ENCODE measurements at regions of chr12 and their contacts with region 1.

Region 1: GRCh38 chr12:116620492-116621191 is 61.5 kb downstream of the MAP1LC3B2 start:
- DNase-seq: no peak
- CTCF ChIP-seq: no peak

Region 2: DNA sequence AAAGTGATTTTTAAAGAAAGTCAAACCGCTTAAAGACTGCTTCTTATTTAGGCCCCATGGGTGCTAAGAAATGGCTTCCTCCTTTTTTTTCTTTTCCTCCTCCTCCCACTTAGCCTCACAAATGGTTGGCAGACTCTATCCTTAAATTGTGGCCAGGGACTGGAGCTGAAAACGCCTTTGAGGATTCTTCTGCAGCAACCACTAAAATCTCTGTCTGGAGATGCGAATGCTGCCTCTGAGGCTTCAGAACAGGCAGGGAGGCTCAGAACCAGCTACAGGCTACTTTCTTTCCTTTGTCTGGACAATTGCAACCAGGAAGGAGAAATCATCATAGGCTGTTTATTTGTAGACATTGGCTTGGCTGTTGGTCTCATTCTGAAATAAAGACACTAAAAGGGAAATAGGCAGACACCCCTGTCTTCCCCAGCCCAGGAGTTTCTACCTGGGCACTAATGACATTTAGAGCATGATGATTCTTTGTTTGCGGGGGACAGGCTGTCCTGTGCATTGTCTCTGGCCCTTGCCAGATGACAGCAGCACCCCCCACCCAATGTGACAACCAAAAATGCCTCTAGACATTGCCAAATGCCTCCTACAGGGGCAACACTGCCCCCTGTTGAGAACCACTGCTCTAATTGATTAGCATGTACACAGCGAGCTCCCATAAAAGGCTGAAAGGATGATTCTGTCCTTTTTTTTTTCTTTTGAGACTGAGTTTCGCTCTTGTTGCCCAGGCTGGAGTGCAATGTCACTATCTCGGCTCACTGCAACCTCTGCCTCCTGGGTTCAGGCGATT is 11.1 kb before region 1 on chr12:
- CTCF ChIA-PET with region 1: interaction called, 16 read pairs
- POLR2A ChIA-PET with region 1: no interaction called
- DNase-seq: no peak
- CTCF ChIP-seq: peak; percentile 20